ENCODE measurements at regions of chr1 and their contacts with region 1.

Region 1: GRCh38 chr1:95084317-95085176 is 11.8 kb upstream of the ALG14 start:
- DNase-seq: peak in 1 of 2 donors; percentile 61
- H3K4me3 ChIP-seq: no peak overlapping the region
- H3K27ac ChIP-seq: no peak overlapping the region
- H3K4me1 ChIP-seq: peaks cover 0 to 16% (median 0%) of the 10 kb centered on the region in 4 donors
- H3K27me3 ChIP-seq: no peaks in the 10 kb centered on the region
- CTCF ChIP-seq: peak in 5 of 7 experiments; percentile 29 to 64 (median 45)
- EP300 ChIP-seq: no peak
- POLR2A ChIP-seq: no peak

Region 2: GRCh38 chr1:95233737-95234500 is 149.4 kb after region 1 on chr1 and contains the start of gene RWDD3:
- intact Hi-C with region 1: loop called (anchors 10 kb)
- DNase-seq: peak; percentile 96 to 98
- H3K4me3 ChIP-seq: peak within 1 kb of the TSS; percentile 64 to 89 (median 77)
- H3K27ac ChIP-seq: peak within 1 kb of the TSS; percentile 78 to 88 (median 85)
- H3K4me1 ChIP-seq: peaks cover 12 to 76% (median 43%) of the 10 kb centered on the region in 4 donors
- H3K27me3 ChIP-seq: no peaks in the 10 kb centered on the region
- CTCF ChIP-seq: peak in 5 of 7 experiments; percentile 30 to 93 (median 89)
- EP300 ChIP-seq: peak; percentile 15
- POLR2A ChIP-seq: peak in 1 of 4 donors; percentile 19
- total RNA-seq, gene RWDD3: 8.1 to 36.2 (median 20.0) TPM